Cardiac septum (tissue), 1 donor: ENCODE measurements at regions of chr2 and their contacts with region 1.

Region 1: GRCh38 chr2:55718165-55719008 is 24.7 kb upstream of the PNPT1 start:
- DNase-seq: no peak

Region 2: DNA sequence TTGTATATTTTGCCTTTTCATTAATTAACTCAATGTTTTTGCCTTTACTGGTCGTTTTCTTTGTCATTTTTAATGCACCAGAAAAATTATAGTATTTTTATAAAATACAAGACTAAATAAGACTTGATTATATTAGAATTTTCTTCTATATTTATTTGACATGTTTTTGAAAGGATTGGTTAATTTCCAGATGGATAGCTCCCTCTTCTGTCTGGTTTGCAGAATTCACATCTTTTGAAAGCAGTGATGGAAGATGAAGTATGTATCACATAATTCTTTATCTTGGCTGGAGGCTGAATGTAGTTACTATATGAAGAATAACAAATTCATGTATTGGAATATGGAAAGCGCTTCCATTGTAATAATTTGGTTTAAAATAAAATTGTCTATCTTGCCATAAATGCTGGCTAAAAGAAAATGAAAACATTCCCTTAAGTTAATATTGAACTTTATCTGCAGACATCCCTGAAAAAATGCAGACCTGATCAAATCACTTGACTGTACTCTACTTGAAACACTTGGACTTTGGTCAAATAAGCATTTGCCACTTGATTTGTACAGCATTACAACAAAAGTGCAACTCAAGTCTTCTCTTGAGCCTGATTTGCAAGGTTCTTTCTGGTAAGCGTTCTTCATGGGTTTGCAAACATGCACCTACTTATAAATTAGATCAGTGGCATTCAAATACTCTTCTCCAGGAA is 291.5 kb after region 1 on chr2:
- intact Hi-C with region 1: loop called (anchors 5 kb)
- DNase-seq: no peak

Region 3: GRCh38 chr2:56132138-56132537 is 413.8 kb after region 1 on chr2:
- intact Hi-C with region 1: loop called (anchors 2 kb)
- DNase-seq: no peak

Region 4: DNA sequence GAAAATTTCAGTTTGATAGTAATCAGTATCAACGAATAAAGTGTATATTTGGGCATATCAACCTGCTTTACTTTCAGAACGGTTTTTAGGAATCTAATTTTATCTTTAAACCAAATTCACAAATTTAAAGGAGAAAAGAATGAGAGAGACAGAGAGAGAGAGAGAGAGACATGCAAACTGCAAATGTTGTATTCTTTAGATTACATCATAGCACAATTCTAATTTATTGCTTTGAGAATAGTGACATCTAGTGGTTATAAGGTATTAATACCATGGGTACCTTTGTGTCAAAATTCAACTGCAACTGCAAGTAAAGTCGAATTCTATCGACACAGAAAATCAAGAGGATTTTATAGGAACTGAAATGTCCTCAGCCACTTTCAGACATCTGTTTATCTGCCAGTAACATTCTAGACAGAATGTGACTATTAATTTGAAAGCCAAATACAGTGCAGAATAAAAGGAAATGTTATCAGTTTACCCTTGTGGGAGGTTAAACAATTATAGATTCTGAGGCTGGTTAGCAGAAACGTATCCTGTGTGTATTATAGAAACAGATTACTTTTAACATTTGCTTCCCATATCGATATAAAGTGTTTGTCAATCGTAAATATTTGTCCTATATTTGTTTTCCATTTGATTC is 1798.4 kb after region 1 on chr2:
- intact Hi-C with region 1: loop called (anchors 5 kb)
- DNase-seq: no peak